ENCODE measurements at regions of chr6 and their contacts with region 1.

Region 1: GRCh38 chr6:32971581-32972352 is 3.4 kb downstream of the BRD2 start:
- DNase-seq: peak; percentile 94
- CTCF ChIP-seq: no peak

Region 2: GRCh38 chr6:32627831-32628230 is 343.9 kb before region 1 on chr6:
- in situ Hi-C with region 1: no loop called
- DNase-seq: no peak
- CTCF ChIP-seq: no peak

Region 3: GRCh38 chr6:32885698-32886286 is 86.0 kb before region 1 on chr6:
- in situ Hi-C with region 1: loop called (anchors 10 kb)
- DNase-seq: peak; percentile 66
- CTCF ChIP-seq: peak; percentile 44